Heart left ventricle (tissue), 16 donors: ENCODE measurements at regions of chr13 and their contacts with region 1.

Region 1: GRCh38 chr13:26348966-26349365 is 95.0 kb downstream of the CDK8 start:
- DNase-seq: no peak
- ATAC-seq: no peak
- H3K4me3 ChIP-seq: no peak overlapping the region
- H3K27ac ChIP-seq: no peak overlapping the region
- H3K4me1 ChIP-seq: peaks cover 0 to 8% (median 0%) of the 10 kb centered on the region in 12 donors
- H3K27me3 ChIP-seq: no peaks in the 10 kb centered on the region
- CTCF ChIP-seq: no peak
- POLR2A ChIP-seq: no peak

Region 2: DNA sequence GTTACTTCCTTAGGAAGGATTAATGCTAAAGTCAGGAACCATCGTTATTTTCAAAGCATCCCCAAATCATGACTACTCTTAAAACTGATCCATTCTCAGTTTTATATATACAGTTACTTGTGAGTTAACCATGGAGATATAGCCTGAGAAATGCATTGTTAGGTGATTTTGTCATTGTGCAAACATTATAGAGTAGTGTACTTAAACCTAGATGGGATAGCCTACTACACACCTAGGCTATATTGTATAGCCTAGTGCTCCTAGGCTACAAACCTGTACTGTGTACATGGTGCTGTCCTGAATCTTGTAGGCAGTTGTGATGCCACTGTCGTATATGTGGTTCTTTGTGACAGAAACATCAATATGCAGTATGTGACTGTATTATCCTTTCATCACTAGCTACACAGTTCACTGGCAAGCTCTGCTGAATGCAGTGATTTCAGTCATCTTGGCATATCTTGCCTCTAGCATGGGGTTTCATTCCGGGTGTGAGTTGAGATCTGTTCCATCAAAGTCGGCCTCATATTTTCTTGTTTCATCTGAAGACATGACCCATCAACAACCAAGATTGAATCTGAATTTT is 49.7 kb before region 1 on chr13:
- intact Hi-C with region 1: loop called in 1 of 10 experiments (anchors 10 kb)
- DNase-seq: no peak
- ATAC-seq: peak in 2 of 4 donors; percentile 15 to 18
- H3K4me3 ChIP-seq: no peak overlapping the region
- H3K27ac ChIP-seq: no peak overlapping the region
- H3K4me1 ChIP-seq: peaks cover 0 to 54% (median 24%) of the 10 kb centered on the region in 12 donors
- H3K27me3 ChIP-seq: no peaks in the 10 kb centered on the region
- CTCF ChIP-seq: no peak
- POLR2A ChIP-seq: no peak

Region 3: DNA sequence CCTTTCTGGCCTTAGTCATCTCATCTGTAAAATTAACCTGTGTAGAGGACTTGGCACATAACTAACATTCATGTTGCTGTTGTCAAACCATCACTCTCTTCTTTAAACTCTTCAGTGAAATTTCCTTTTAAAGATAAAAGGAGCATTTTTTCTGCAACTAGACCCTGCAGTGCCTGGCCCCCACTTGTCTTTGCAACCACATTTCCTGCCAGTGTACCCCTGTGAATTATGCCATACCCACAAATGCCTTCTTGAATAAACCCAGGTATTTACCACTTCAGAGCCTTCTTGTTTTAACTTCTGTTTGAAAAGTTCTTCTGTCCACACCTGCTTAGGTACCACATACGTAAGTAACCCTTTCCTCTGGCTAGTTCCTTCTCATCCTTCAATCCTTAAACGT is 23.8 kb after region 1 on chr13:
- intact Hi-C with region 1: no loop called
- DNase-seq: no peak
- ATAC-seq: no peak
- H3K4me3 ChIP-seq: no peak overlapping the region
- H3K27ac ChIP-seq: no peak overlapping the region
- H3K4me1 ChIP-seq: peaks cover 0 to 7% (median 0%) of the 10 kb centered on the region in 12 donors
- H3K27me3 ChIP-seq: no peaks in the 10 kb centered on the region
- CTCF ChIP-seq: no peak
- POLR2A ChIP-seq: no peak

Region 4: DNA sequence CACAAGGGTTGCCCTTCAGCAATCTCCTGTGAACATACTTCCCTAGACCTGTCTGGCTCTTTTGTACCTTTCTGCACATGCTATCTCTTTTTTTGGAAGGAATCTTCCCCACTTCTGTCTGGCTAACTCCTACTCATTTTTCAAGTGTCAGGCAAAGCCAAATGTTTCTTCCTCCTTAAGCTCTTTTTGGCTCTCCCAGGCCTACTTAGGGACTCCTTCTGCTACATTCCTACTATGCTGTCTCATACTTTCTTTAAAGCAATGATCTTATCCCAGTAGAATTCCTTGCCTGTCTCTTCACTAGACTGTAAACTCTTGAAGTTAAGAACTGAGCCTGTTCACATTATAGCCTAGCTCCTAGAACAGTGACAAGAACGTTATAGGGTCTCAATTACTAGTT is 93.6 kb after region 1 on chr13:
- intact Hi-C with region 1: no loop called
- DNase-seq: no peak
- ATAC-seq: peak; percentile 63 to 97 (median 76)
- H3K4me3 ChIP-seq: no peak overlapping the region
- H3K27ac ChIP-seq: peak overlapping the region in 6 of 12 donors; percentile 12 to 67 (median 56)
- H3K4me1 ChIP-seq: peaks cover 0 to 11% (median 0%) of the 10 kb centered on the region in 12 donors
- H3K27me3 ChIP-seq: no peaks in the 10 kb centered on the region
- CTCF ChIP-seq: no peak
- POLR2A ChIP-seq: no peak